ENCODE measurements at regions of chr2 and their contacts with region 1.

Region 1: DNA sequence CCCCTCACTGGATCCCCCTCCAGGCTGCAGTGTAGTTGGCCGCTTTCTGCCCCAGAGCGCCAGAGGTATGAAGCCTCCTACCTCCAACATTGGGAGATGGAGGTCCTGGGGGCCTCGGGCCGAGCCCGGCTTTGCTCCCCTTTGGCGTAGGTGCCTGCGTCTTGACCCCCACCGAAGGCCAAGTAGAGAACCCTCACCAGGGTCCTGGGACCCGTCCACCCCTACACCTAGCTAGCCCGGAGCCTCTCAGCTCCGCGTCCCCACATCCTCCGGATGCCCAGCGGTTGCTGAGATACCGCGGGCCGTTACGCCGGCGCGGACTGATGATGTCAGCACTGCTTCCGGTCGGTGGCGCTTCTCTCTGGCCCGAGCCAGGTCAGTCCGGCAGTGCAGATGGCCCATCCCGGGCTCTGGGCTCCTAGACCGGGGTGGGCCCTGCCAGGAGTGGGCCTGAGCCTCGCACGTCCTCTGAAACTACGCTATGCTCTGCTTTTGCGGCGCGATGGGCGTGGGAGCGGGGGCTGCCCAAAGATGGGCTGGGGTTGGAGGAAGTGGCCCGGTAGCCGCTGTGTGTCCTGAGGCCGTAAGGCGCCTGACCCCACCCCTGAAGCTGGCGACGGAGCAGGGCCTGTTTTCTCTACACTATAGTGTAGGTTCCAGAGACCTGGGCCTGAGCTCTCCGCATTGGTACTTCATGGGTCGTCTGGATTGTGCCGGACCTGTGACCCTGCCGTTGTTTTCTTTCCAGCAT is at the starts of genes GLB1L and STK16:
- DNase-seq: peak; percentile 82
- H3K4me3 ChIP-seq: peak within 1 kb of the TSS; percentile 91
- CTCF ChIP-seq: no peak

Region 2: GRCh38 chr2:219362524-219363164 is 117.3 kb after region 1 on chr2:
- in situ Hi-C with region 1: loop called (anchors 10 kb)
- DNase-seq: peak; percentile 92
- H3K4me3 ChIP-seq: no peak overlapping the region
- CTCF ChIP-seq: no peak